CD8-positive, alpha-beta T cell (primary cell): ENCODE measurements at regions of chr18 and their contacts with region 1.

Region 1: DNA sequence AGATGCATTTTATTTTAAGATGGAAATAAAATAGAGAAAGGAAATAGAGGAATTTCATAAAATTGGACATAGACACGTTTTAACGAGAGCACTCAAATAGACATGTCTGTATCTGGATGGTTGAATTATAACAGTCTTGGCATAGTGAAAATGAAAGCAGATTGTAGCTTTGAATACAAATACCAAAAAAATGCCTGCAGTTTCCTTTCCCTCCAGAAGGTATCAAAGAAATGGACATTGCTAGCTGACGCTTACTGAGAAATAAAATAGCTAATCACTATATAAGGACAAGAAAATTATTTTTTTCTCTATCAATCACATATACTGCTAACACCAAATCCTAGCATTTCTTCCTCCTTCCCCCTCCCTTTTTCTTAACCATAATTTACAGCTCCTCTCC is 11.4 kb upstream of the MAPRE2 start:
- DNase-seq: peak in 2 of 9 experiments; percentile 58 to 76
- ATAC-seq: peak; percentile 60
- H3K4me3 ChIP-seq: peak overlapping the region; percentile 48 to 52
- H3K4me3 Mint-ChIP-seq: peak overlapping the region; percentile 76
- H3K27ac ChIP-seq: peak overlapping the region; percentile 84 to 92
- H3K27ac Mint-ChIP-seq: peak overlapping the region; percentile 95
- H3K4me1 ChIP-seq: peaks cover 56% of the 10 kb centered on the region
- H3K4me1 Mint-ChIP-seq: peaks cover 68% of the 10 kb centered on the region
- H3K27me3 ChIP-seq: no peaks in the 10 kb centered on the region
- H3K27me3 Mint-ChIP-seq: no peaks in the 10 kb centered on the region
- CTCF ChIP-seq: peak; percentile 7

Region 2: GRCh38 chr18:35005963-35006577 is 23.7 kb before region 1 on chr18:
- CTCF ChIA-PET with region 1: interaction called, 20 read pairs
- POLR2A ChIA-PET with region 1: no interaction called
- intact Hi-C with region 1: no loop called
- DNase-seq: peak in 3 of 9 experiments; percentile 7 to 75 (median 66)
- ATAC-seq: peak; percentile 84
- H3K4me3 ChIP-seq: no peak overlapping the region
- H3K4me3 Mint-ChIP-seq: no peak overlapping the region
- H3K27ac ChIP-seq: no peak overlapping the region
- H3K27ac Mint-ChIP-seq: no peak overlapping the region
- H3K4me1 ChIP-seq: no peaks in the 10 kb centered on the region
- H3K4me1 Mint-ChIP-seq: no peaks in the 10 kb centered on the region
- H3K27me3 ChIP-seq: no peaks in the 10 kb centered on the region
- H3K27me3 Mint-ChIP-seq: no peaks in the 10 kb centered on the region
- CTCF ChIP-seq: peak; percentile 69

Region 3: GRCh38 chr18:35071819-35072247 is 42.1 kb after region 1 on chr18:
- CTCF ChIA-PET with region 1: interaction called, 4 read pairs
- POLR2A ChIA-PET with region 1: no interaction called
- intact Hi-C with region 1: loop called (anchors 2 to 5 kb)
- DNase-seq: no peak
- ATAC-seq: no peak
- H3K4me3 ChIP-seq: no peak overlapping the region
- H3K4me3 Mint-ChIP-seq: no peak overlapping the region
- H3K27ac ChIP-seq: no peak overlapping the region
- H3K27ac Mint-ChIP-seq: peak overlapping the region; percentile 53
- H3K4me1 ChIP-seq: peaks cover 6% of the 10 kb centered on the region
- H3K4me1 Mint-ChIP-seq: peaks cover 70% of the 10 kb centered on the region
- H3K27me3 ChIP-seq: no peaks in the 10 kb centered on the region
- H3K27me3 Mint-ChIP-seq: no peaks in the 10 kb centered on the region
- CTCF ChIP-seq: no peak

Region 4: GRCh38 chr18:35143622-35144596 is 114.1 kb after region 1 on chr18:
- CTCF ChIA-PET with region 1: interaction called, 101 read pairs
- POLR2A ChIA-PET with region 1: interaction called, 5 read pairs
- intact Hi-C with region 1: loop called (anchors 1 kb)
- DNase-seq: peak in 8 of 9 experiments; percentile 15 to 63 (median 38)
- ATAC-seq: peak; percentile 65
- H3K4me3 ChIP-seq: no peak overlapping the region
- H3K4me3 Mint-ChIP-seq: no peak overlapping the region
- H3K27ac ChIP-seq: no peak overlapping the region
- H3K27ac Mint-ChIP-seq: no peak overlapping the region
- H3K4me1 ChIP-seq: no peaks in the 10 kb centered on the region
- H3K4me1 Mint-ChIP-seq: peaks cover 4% of the 10 kb centered on the region
- H3K27me3 ChIP-seq: no peaks in the 10 kb centered on the region
- H3K27me3 Mint-ChIP-seq: no peaks in the 10 kb centered on the region
- CTCF ChIP-seq: no peak

Region 5: GRCh38 chr18:35290073-35290735 is 260.4 kb after region 1 on chr18 and contains the start of gene ZSCAN30:
- CTCF ChIA-PET with region 1: no interaction called
- POLR2A ChIA-PET with region 1: interaction called, 5 read pairs
- intact Hi-C with region 1: loop called in 1 of 2 experiments (anchors 2 kb)
- DNase-seq: peak; percentile 92 to 98 (median 96)
- ATAC-seq: peak; percentile 94
- H3K4me3 ChIP-seq: peak within 1 kb of the TSS; percentile 78 to 82
- H3K4me3 Mint-ChIP-seq: peak within 1 kb of the TSS; percentile 99
- H3K27ac ChIP-seq: peak within 1 kb of the TSS; percentile 69 to 85
- H3K27ac Mint-ChIP-seq: peak within 1 kb of the TSS; percentile 99
- H3K4me1 ChIP-seq: peaks cover 17% of the 10 kb centered on the region
- H3K4me1 Mint-ChIP-seq: peaks cover 70% of the 10 kb centered on the region
- H3K27me3 ChIP-seq: no peaks in the 10 kb centered on the region
- H3K27me3 Mint-ChIP-seq: no peaks in the 10 kb centered on the region
- CTCF ChIP-seq: no peak
- total RNA-seq, gene ZSCAN30: 6.2 to 6.3 TPM

Region 6: DNA sequence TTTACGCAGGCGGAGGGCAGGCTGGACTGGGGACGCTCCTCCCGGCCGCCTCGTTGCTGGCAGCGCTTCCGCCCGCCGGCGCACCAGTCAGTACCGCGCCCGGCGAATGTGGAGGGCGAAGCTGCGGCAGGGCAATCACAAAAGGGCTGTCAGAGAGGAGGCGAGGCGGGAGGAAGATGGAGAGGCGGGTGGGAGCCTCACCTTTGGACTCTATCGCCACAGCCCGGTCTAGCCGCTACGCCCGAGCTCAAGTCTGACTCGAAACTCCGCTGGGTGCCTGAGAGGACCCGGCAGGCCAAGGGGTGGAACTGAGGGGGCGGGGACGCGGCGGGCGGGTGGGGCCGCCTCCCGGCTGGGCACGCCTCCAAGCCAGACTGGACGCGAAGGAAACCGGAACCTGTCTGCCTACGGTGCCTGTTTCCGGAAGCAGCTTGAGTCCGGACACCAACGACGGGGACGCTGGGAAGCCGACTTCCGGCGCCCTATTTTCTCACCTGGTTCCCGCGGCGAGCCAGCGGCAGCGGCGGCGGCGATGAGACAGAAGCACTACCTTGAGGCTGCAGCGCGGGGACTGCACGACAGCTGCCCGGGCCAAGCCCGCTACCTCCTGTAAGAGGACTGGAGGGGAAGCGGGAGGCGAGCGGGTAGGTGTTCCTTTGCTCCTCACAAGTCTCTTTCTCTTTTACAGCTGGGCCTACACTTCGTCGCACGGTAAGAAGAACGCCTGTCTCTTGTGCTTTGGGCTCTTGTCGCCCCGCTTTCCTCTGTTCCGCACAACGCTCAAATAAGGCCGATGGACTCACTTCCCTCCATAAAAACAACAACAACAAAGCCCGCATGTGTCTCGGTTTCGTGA is 942.7 kb after region 1 on chr18 and contains the start of gene RMP24:
- CTCF ChIA-PET with region 1: no interaction called
- POLR2A ChIA-PET with region 1: no interaction called
- intact Hi-C with region 1: loop called in 1 of 2 experiments (anchors 5 kb)
- DNase-seq: peak; percentile 88 to 97 (median 93)
- ATAC-seq: peak; percentile 84
- H3K4me3 ChIP-seq: peak within 1 kb of the TSS; percentile 60 to 89
- H3K4me3 Mint-ChIP-seq: peak within 1 kb of the TSS; percentile 94
- H3K27ac ChIP-seq: peak within 1 kb of the TSS; percentile 57 to 90
- H3K27ac Mint-ChIP-seq: peak within 1 kb of the TSS; percentile 98
- H3K4me1 ChIP-seq: peaks cover 35% of the 10 kb centered on the region
- H3K4me1 Mint-ChIP-seq: peaks cover 65% of the 10 kb centered on the region
- H3K27me3 ChIP-seq: no peaks in the 10 kb centered on the region
- H3K27me3 Mint-ChIP-seq: no peaks in the 10 kb centered on the region
- CTCF ChIP-seq: no peak